ENCODE measurements at regions of chr3 and their contacts with region 1.

Region 1: DNA sequence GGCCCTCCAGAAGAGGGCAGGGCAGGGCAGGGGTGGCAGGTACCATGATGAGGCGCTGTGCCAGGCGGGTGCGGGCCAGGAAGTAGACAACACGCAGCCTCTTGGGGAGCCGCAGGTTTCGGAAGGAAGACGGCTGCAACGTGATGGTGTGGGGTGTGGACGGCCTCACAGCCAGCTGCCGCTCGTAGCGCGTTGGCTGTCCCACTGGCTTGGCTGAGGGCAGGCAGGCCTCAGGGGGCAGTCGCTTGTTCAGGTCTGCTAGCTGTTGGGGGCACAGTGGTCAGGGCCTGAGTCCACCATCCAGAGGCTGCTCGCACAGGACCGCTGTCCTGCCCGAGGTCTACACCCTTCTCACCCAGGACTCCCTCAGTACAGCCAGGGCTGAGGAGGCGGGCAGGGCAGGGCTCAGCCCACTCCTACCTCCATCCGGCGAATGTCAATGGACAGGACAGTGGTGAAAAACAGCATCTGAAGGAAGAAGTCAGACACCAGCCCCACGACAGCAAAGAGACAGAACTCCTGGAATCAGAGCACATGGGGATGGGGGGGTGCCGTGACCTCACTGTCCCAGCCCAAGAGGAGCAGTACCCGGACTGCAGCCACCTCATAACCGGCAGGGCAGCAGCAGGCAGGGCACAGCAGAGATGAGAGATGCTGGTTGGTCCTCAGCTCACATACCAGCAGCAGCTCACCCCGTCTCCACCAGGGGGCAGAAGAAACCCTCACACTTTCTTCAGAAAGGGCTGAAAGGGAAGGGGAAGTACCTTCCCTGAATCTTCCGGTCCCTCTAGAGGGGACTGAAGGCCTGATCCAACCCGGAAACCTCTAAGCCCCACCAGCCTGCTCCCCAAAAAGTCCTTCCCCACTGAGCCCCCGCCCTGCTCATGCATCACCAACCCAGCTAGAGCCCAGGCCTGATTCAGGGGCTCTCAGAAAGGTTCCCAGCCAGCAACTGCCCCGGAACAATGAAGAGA is 40.0 kb downstream of the PTPN23 start:
- DNase-seq: peak; percentile 92
- H3K4me3 Mint-ChIP-seq: no peak overlapping the region
- H3K27ac Mint-ChIP-seq: peak overlapping the region; percentile 17
- H3K4me1 Mint-ChIP-seq: no peaks in the 10 kb centered on the region
- H3K27me3 Mint-ChIP-seq: no peaks in the 10 kb centered on the region
- CTCF ChIP-seq: peak; percentile 83

Region 2: GRCh38 chr3:47475570-47476329 is 55.0 kb after region 1 on chr3 and contains the start of gene SCAP:
- CTCF ChIA-PET with region 1: interaction called, 20 read pairs
- intact Hi-C with region 1: loop called (anchors 2 kb)
- DNase-seq: peak; percentile 90
- H3K4me3 Mint-ChIP-seq: peak within 1 kb of the TSS; percentile 99
- H3K27ac Mint-ChIP-seq: peak within 1 kb of the TSS; percentile 84
- H3K4me1 Mint-ChIP-seq: peaks cover 9% of the 10 kb centered on the region
- H3K27me3 Mint-ChIP-seq: no peaks in the 10 kb centered on the region
- CTCF ChIP-seq: peak; percentile 79
- total RNA-seq, gene SCAP: 67.6 and 74.2 TPM in 2 replicates

Region 3: DNA sequence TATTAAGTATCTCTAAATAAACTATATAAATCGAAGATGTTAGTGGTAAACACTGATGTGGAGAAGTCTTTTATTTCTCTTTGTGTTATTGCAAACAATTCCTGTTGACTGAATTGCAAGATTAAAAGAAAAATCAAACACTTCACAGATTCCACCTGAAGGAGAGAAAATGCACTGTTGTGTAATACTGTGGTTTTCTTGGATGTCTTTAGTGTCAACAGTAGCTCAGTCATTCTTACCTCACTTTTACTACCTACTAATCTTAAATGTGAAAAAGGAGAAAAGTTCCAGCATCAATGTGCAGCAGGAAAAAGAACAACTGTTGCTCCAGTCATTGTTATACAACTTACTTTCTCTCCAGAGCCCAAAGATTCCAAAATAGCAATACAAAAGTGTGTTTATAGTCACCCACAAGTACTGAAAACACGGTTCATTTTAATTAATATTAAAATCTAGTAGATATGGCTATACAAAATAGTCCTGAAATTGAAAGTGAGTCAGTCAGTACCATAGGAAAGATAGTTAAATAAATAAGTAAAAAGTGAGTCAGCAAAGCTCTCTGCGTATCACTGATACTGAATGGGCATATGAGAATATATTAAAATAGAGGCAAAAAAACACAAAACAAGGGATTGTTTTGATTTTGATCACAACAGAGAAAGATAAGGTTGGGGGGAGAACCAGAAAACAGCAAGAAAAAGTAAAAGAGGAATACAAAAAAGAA is 248.4 kb after region 1 on chr3:
- CTCF ChIA-PET with region 1: no interaction called
- intact Hi-C with region 1: no loop called
- DNase-seq: no peak
- H3K4me3 Mint-ChIP-seq: no peak overlapping the region
- H3K27ac Mint-ChIP-seq: no peak overlapping the region
- H3K4me1 Mint-ChIP-seq: no peaks in the 10 kb centered on the region
- H3K27me3 Mint-ChIP-seq: no peaks in the 10 kb centered on the region
- CTCF ChIP-seq: no peak

Region 4: DNA sequence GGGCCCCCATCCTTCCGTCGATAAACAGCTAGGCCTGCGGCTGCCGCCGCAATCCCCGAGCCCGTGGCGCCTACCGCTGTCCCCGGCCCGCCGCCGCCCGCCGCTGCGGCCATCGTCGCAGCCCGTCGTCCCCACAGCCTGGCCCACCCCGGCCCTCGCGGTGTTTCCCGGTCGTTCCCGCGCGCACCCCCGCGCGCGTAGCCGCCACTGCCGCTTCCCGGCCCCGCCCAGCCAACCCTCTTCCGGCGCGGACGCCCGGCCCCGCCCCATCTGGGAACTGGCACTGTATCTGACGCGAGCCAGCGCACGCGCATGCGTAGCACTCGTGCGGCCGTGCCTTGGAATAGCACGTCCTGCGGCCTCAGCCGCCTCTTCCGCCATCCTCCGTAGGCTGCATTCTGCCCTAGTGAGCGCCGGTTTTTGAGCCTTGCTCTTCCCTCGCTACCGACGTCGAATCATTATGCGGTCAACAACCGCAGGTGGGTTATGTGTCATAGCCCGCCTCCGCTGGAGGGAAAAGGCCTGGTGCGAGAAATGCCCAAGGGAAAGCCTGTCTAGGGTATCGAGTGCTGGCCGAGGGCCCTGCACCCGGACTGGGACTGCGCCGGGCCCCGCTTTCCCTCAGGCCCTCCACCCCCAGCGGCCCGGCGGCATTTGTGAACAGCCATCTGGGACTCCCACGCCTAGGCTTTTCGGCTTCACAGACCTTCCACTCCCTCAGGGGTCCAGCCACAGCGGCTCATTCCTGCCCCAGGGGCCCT is 361.1 kb after region 1 on chr3 and contains the start of gene SMARCC1:
- CTCF ChIA-PET with region 1: interaction called, 4 read pairs
- intact Hi-C with region 1: loop called (anchors 5 kb)
- DNase-seq: peak; percentile 98
- H3K4me3 Mint-ChIP-seq: peak within 1 kb of the TSS; percentile 98
- H3K27ac Mint-ChIP-seq: peak within 1 kb of the TSS; percentile 99
- H3K4me1 Mint-ChIP-seq: no peaks in the 10 kb centered on the region
- H3K27me3 Mint-ChIP-seq: no peaks in the 10 kb centered on the region
- CTCF ChIP-seq: no peak
- total RNA-seq, gene SMARCC1: 122 and 127 TPM in 2 replicates

Region 5: GRCh38 chr3:47989981-47990440 is 569.2 kb after region 1 on chr3:
- CTCF ChIA-PET with region 1: no interaction called
- intact Hi-C with region 1: no loop called
- DNase-seq: peak; percentile 72
- H3K4me3 Mint-ChIP-seq: no peak overlapping the region
- H3K27ac Mint-ChIP-seq: no peak overlapping the region
- H3K4me1 Mint-ChIP-seq: peaks cover 9% of the 10 kb centered on the region
- H3K27me3 Mint-ChIP-seq: no peaks in the 10 kb centered on the region
- CTCF ChIP-seq: peak; percentile 64

Measured in Calu3 (cell line).